ENCODE measurements at regions of chr20 and their contacts with region 1.

Region 1: DNA sequence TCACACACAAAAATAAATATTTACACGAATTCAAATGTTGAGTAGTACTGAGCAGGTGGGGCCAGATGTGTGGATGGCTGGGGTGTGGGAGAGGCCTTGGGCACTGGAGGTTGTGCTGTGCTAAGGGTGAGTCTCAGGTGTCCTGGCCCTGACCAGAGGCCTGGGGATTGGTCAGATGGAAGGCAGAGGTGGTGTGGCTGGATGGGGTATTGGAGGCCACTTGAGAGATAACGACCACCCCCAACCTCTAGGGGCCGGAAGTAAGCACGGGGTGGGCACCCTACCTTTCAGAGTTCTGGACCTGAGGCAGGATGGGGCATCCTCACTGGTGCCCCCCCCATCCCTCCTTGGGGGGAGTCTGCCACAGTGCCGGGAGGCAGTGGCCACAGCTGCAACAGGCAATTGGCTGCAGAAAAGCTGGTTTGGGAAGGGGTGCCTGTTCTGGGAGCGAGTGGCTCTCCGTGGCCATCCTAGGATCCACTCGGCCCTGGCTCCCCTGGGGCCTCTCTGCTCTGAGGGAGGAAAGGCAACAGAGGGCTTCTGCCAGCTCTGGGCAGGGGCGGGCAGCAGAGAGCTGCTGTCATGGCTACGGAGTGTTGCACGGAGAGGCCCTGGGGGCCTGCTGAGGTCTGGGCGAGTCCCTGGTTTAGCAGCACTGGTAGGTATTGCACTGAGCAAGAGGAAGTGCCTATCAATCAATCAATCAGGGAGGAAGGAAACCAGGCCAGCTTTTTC is 87.6 kb downstream of the ASXL1 start:
- DNase-seq: peak; percentile 44 to 87 (median 86)
- H3K4me3 ChIP-seq: peak overlapping the region in 1 of 7 experiments; percentile 23
- H3K27ac ChIP-seq: peak overlapping the region; percentile 30 to 65
- H3K4me1 ChIP-seq: peaks cover 0 to 38% (median 25%) of the 10 kb centered on the region in 4 experiments
- H3K27me3 ChIP-seq: no peaks in the 10 kb centered on the region

Region 2: DNA sequence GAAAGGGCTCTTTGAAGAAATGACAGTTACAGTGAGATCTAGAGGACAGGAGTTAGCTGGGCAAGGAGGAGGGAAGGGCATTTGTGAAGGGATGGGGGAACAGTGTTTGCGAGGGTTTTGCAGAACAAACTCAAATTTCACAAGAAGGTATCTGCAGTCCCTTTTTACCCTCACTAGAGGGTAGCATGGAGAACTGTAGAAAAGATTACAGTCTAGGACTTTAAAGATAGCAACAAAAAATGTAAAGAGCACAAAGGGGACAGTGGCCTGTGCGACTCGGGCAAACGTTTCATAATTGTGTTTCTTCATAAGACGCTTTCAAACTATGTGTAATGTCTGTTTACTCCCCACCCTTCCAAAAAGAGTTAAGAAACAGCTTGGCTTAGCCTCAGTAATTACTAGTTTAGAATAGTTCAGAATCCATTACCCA is 108.8 kb before region 1 on chr20:
- CTCF ChIA-PET with region 1: interaction called, 11 read pairs
- POLR2A ChIA-PET with region 1: no interaction called
- DNase-seq: peak; percentile 61 to 73 (median 70)
- H3K4me3 ChIP-seq: no peak overlapping the region
- H3K27ac ChIP-seq: no peak overlapping the region
- H3K4me1 ChIP-seq: peaks cover 0 to 11% (median 9%) of the 10 kb centered on the region in 4 experiments
- H3K27me3 ChIP-seq: no peaks in the 10 kb centered on the region

Region 3: GRCh38 chr20:32574296-32575226 is 128.9 kb after region 1 on chr20:
- CTCF ChIA-PET with region 1: no interaction called
- POLR2A ChIA-PET with region 1: no interaction called
- DNase-seq: peak; percentile 83 to 94 (median 94)
- H3K4me3 ChIP-seq: peak overlapping the region in 2 of 7 experiments; percentile 2 to 28
- H3K27ac ChIP-seq: peak overlapping the region in 1 of 2 experiments; percentile 56
- H3K4me1 ChIP-seq: peaks cover 0 to 92% (median 53%) of the 10 kb centered on the region in 4 experiments
- H3K27me3 ChIP-seq: no peaks in the 10 kb centered on the region